ENCODE measurements at regions of chr15 and their contacts with region 1.

Region 1: GRCh38 chr15:98727115-98728085 is 79.1 kb downstream of the IGF1R start:
- DNase-seq: peak; percentile 65 to 95
- H3K4me3 ChIP-seq: peak overlapping the region in 1 of 2 donors; percentile 16
- H3K27ac ChIP-seq: peak overlapping the region; percentile 95 to 97
- H3K4me1 ChIP-seq: peaks cover 30 to 74% of the 10 kb centered on the region in 2 donors
- H3K27me3 ChIP-seq: no peaks in the 10 kb centered on the region
- CTCF ChIP-seq: no peak

Region 2: GRCh38 chr15:98671060-98672008 is 56.1 kb before region 1 on chr15:
- intact Hi-C with region 1: loop called (anchors 2 kb)
- DNase-seq: no peak
- H3K4me3 ChIP-seq: peak overlapping the region in 1 of 2 donors; percentile 40
- H3K27ac ChIP-seq: peak overlapping the region; percentile 83 to 84
- H3K4me1 ChIP-seq: peaks cover 24 to 70% of the 10 kb centered on the region in 2 donors
- H3K27me3 ChIP-seq: no peaks in the 10 kb centered on the region
- CTCF ChIP-seq: no peak

Region 3: GRCh38 chr15:98760112-98760826 is 32.9 kb after region 1 on chr15:
- intact Hi-C with region 1: loop called (anchors 5 kb)
- DNase-seq: no peak
- H3K4me3 ChIP-seq: no peak overlapping the region
- H3K27ac ChIP-seq: peak overlapping the region; percentile 15 to 53
- H3K4me1 ChIP-seq: peaks cover 4 to 25% of the 10 kb centered on the region in 2 donors
- H3K27me3 ChIP-seq: no peaks in the 10 kb centered on the region
- CTCF ChIP-seq: no peak

Region 4: DNA sequence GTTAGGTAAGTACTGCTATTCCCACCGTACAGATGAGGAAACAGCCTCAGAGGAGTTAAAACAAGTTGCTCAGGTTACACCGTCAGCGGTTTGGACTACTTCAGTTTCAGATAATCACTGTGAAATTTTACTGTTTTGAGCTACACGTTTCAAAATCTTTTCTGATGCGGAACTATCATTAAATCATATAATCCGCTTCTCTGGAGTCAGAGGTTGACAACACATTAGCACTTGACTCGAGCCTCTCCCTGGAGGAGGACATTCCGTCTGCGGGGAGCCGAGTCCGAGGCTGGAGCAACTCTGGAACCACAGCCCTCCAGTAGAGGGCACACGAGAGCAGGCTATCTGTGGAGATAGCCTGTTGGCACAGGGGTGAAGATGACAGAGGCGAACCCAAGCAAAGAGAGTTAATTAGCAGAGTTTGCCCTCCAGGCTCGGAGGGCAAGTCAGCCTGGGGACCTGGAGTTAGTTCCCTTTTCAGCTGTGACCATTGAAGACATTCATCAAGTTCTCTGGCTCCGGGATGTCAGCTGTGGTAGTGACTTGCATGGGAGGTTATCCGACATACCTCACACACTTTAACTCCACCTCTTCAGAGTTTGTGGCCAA is 52.2 kb after region 1 on chr15:
- intact Hi-C with region 1: loop called (anchors 5 kb)
- DNase-seq: peak in 1 of 2 donors; percentile 81
- H3K4me3 ChIP-seq: no peak overlapping the region
- H3K27ac ChIP-seq: peak overlapping the region; percentile 9 to 42
- H3K4me1 ChIP-seq: peaks cover 6 to 36% of the 10 kb centered on the region in 2 donors
- H3K27me3 ChIP-seq: no peaks in the 10 kb centered on the region
- CTCF ChIP-seq: peak; percentile 77 to 89 (median 87)

Measured in ascending aorta (tissue), 2 donors.